ENCODE measurements at regions of chr1 and their contacts with region 1.

Region 1: DNA sequence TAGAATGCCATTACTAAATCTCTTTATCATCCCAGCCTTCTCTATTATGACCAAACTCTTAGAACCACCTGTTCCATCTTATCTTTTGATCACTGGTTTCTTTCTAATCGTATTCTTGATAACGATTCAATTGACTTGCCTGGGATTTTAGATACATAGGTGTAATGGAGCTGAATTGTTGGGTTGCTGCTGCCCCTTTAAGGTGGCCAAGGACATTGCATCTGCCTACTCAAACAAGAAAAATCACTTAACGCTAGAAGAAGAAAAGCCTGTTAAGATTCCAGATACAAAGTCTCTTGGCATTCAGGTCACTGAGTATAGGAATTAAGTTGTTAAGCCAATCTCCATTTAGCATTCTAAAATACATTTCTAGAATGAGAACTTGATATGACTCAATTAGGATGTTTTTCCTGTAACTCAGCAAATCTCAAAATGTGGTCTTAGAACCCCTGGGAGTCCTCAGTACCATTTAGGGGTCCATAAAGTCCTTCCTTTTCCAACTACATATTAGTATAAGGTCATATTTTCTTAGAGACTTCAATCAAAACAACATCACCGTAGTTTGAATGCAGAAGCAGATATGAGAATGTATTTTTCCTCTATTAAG is 12.4 kb downstream of the NEXN start:
- DNase-seq: no peak
- ATAC-seq: peak; percentile 78 to 86

Region 2: DNA sequence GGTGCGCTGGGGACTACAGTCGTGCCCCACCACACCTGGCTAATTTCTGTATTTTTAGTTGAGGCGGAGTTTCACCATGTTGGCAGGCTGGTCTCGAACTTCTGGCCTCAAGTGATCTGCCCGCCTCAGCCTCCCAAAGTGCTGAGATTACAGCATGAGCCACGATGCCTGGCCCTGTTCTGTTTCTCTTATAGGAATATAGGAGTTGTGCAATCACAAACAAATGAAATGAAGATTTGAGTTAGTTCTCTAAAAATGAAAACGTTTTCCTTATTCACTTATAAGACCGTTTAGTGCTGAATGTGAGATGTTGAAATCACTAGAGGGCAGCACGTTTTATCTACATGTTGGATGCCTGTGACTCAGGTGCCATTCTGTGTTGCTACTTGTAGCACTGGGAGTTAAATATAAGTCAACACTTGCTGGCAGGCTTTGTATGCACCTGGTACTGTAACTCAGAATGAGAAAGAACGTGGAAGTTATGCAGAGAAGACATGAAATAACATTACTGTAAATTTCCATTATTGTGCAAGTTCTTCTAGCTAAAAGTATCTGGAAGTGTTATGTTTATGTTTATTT is 75.6 kb before region 1 on chr1:
- intact Hi-C with region 1: loop called in 1 of 2 experiments (anchors 5 kb)
- DNase-seq: no peak
- ATAC-seq: peak; percentile 64 to 81

Measured in left cardiac atrium (tissue), 4 donors.